Heart right ventricle (tissue), 16 donors: ENCODE measurements at regions of chr7 and their contacts with region 1.

Region 1: GRCh38 chr7:51187941-51188340 is 128.7 kb downstream of the COBL start:
- DNase-seq: peak; percentile 33 to 47
- ATAC-seq: peak; percentile 63 to 86 (median 77)
- H3K4me3 ChIP-seq: no peak overlapping the region
- H3K27ac ChIP-seq: peak overlapping the region in 7 of 10 donors; percentile 17 to 69 (median 52)
- H3K4me1 ChIP-seq: peaks cover 0 to 44% (median 21%) of the 10 kb centered on the region in 9 donors
- H3K27me3 ChIP-seq: no peaks in the 10 kb centered on the region
- CTCF ChIP-seq: peak in 7 of 9 donors; percentile 15 to 50 (median 30)

Region 2: GRCh38 chr7:49707891-49708290 is 1480.0 kb before region 1 on chr7:
- intact Hi-C with region 1: no loop called
- DNase-seq: no peak
- ATAC-seq: no peak
- H3K4me3 ChIP-seq: no peak overlapping the region
- H3K27ac ChIP-seq: peak overlapping the region in 1 of 10 donors; percentile 44
- H3K4me1 ChIP-seq: peaks cover 0 to 15% (median 0%) of the 10 kb centered on the region in 9 donors
- H3K27me3 ChIP-seq: no peaks in the 10 kb centered on the region
- CTCF ChIP-seq: no peak

Region 3: DNA sequence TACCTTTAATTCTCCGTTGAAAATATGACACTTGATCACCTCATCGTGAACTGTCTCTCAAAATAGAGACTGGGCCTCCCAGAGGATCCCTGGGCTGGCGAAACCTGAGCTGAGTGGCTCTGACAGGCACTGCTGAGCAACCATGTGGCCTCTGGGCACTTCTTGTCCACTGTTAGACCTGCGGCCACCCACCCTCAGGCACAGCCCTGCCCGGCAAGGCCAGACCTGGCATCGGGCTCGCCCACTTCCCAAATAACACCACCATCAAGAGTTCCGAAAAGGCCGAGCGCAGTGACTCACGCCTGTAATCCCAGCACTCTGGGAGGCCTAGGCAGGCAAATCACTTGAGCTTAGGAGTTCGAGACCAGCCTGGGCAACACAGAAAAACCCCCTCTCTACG is 46.2 kb after region 1 on chr7:
- intact Hi-C with region 1: loop called in 1 of 10 experiments (anchors 10 kb)
- DNase-seq: peak in 1 of 2 donors; percentile 29
- ATAC-seq: peak; percentile 34 to 88 (median 74)
- H3K4me3 ChIP-seq: no peak overlapping the region
- H3K27ac ChIP-seq: peak overlapping the region in 4 of 10 donors; percentile 11 to 50 (median 34)
- H3K4me1 ChIP-seq: peaks cover 0 to 26% (median 3%) of the 10 kb centered on the region in 9 donors
- H3K27me3 ChIP-seq: peaks cover 0 to 3% (median 0%) of the 10 kb centered on the region in 7 donors
- CTCF ChIP-seq: no peak

Region 4: GRCh38 chr7:51246258-51247245 is 58.6 kb after region 1 on chr7:
- intact Hi-C with region 1: loop called in 2 of 10 experiments (anchors 5 to 10 kb)
- DNase-seq: peak; percentile 82 to 88
- ATAC-seq: peak; percentile 84 to 97 (median 93)
- H3K4me3 ChIP-seq: no peak overlapping the region
- H3K27ac ChIP-seq: peak overlapping the region in 2 of 10 donors; percentile 9 to 30
- H3K4me1 ChIP-seq: peaks cover 0 to 41% (median 4%) of the 10 kb centered on the region in 9 donors
- H3K27me3 ChIP-seq: no peaks in the 10 kb centered on the region
- CTCF ChIP-seq: peak in 4 of 9 donors; percentile 5 to 30 (median 27)